Prostate gland (tissue), 2 donors: ENCODE measurements at regions of chr1 and their contacts with region 1.

Region 1: DNA sequence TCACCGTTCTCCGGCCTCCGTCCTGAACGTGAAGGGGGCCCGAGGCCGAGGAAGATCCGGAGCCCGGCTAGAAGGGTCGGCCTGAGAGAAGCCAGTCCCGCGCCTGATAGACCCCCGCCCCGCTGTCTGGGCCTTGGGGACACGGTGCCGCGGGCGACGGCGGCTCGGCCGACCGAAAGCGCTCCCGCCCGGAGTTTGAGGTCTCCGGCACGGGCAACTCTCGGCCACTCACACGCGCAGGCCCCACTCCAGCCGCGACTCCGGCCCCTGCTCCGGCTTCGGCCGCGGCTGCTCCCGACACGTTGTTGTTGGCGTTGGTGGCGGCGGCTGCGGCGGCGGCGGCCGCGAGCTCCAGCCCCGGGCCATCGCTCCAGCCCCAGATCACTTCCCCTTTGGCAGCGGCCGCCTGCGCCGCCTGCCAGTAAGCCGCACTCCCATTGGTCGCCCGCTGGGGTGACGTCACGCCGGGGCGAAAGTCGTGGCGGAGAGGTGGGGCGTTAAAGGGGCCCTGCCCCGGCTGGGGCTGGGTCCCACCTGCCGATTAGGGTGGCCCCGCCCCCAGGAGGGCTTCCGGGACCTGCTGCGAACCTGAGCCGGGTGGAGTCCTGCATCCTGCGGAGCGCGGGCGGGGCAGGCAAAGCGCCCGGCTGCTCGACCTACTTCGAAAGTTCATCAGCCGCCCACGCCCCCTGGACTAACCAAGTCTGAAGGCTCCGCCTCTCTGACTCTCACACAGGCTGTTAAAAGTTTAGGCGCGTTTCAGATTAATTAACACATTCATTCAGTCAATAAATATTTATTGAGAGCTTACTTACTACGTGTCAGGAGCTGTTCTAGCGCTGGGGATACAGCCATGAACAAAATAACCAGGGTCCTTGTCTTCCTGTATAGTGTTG is at the start of gene EFCAB14:
- DNase-seq: peak; percentile 96
- H3K4me3 ChIP-seq: peak within 1 kb of the TSS; percentile 87 to 100
- H3K27ac ChIP-seq: peak within 1 kb of the TSS; percentile 68 to 85
- H3K4me1 ChIP-seq: peaks cover 8% of the 10 kb centered on the region
- H3K27me3 ChIP-seq: no peaks in the 10 kb centered on the region
- CTCF ChIP-seq: peak in 1 of 4 experiments; percentile 16
- POLR2A ChIP-seq: peak; percentile 92
- total RNA-seq, gene EFCAB14: 99.9 to 116 TPM

Region 2: GRCh38 chr1:46603858-46604549 is 115.0 kb before region 1 on chr1 and contains the start of gene MKNK1:
- intact Hi-C with region 1: loop called (anchors 5 kb)
- DNase-seq: peak; percentile 97
- H3K4me3 ChIP-seq: peak within 1 kb of the TSS; percentile 81 to 85
- H3K27ac ChIP-seq: peak within 1 kb of the TSS; percentile 75
- H3K4me1 ChIP-seq: peaks cover 6% of the 10 kb centered on the region
- H3K27me3 ChIP-seq: no peaks in the 10 kb centered on the region
- CTCF ChIP-seq: peak in 1 of 4 experiments; percentile 33
- POLR2A ChIP-seq: peak; percentile 98
- total RNA-seq, gene MKNK1: 28.1 to 37.8 TPM

Region 3: GRCh38 chr1:46616277-46617107 is 102.5 kb before region 1 on chr1 and contains the start of gene MOB3C:
- intact Hi-C with region 1: loop called (anchors 2 kb)
- DNase-seq: peak; percentile 75
- H3K4me3 ChIP-seq: peak within 1 kb of the TSS; percentile 79 to 84
- H3K27ac ChIP-seq: peak within 1 kb of the TSS; percentile 89 to 95
- H3K4me1 ChIP-seq: peaks cover 3% of the 10 kb centered on the region
- H3K27me3 ChIP-seq: no peaks in the 10 kb centered on the region
- CTCF ChIP-seq: no peak
- POLR2A ChIP-seq: peak; percentile 79
- total RNA-seq, gene MOB3C: 19.4 to 19.7 TPM

Region 4: GRCh38 chr1:46667782-46668760 is 50.9 kb before region 1 on chr1 and contains the start of gene ATPAF1:
- intact Hi-C with region 1: loop called (anchors 10 kb)
- DNase-seq: peak; percentile 30
- H3K4me3 ChIP-seq: peak within 1 kb of the TSS; percentile 96 to 100
- H3K27ac ChIP-seq: peak within 1 kb of the TSS; percentile 71 to 82
- H3K4me1 ChIP-seq: peaks cover 12% of the 10 kb centered on the region
- H3K27me3 ChIP-seq: no peaks in the 10 kb centered on the region
- CTCF ChIP-seq: peak in 1 of 4 experiments; percentile 6
- POLR2A ChIP-seq: no peak
- total RNA-seq, gene ATPAF1: 52.2 to 71.3 TPM